ENCODE measurements at regions of chr5 and their contacts with region 1.

Region 1: GRCh38 chr5:178075840-178076548 is 37.3 kb upstream of the N4BP3 start:
- DNase-seq: peak; percentile 90
- ATAC-seq: peak; percentile 83
- H3K4me3 Mint-ChIP-seq: peak overlapping the region; percentile 55
- H3K27ac Mint-ChIP-seq: no peak overlapping the region
- H3K4me1 Mint-ChIP-seq: peaks cover 15% of the 10 kb centered on the region
- H3K27me3 Mint-ChIP-seq: peaks cover 15% of the 10 kb centered on the region
- CTCF ChIP-seq: peak; percentile 87

Region 2: DNA sequence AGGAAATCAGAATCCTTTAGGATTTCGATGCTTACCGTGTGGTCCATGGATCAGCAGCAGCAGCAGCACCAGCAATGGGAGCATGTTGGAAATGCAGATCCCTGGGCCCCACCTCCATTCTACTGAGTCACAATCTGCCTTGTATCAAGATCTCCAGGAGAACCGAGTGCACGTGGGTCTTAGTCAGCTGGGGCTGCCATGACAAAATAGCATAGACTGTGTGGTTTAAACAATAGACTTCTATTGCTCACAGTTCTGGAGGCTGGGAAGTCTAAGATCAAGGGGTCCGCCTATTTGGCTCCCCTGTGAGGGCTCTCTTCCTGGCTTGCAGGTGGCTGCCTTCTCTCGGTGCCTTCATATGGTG is 78.7 kb before region 1 on chr5:
- CTCF ChIA-PET with region 1: interaction called, 10 read pairs
- POLR2A ChIA-PET with region 1: no interaction called
- DNase-seq: no peak
- ATAC-seq: no peak
- H3K4me3 Mint-ChIP-seq: no peak overlapping the region
- H3K27ac Mint-ChIP-seq: no peak overlapping the region
- H3K4me1 Mint-ChIP-seq: peaks cover 13% of the 10 kb centered on the region
- H3K27me3 Mint-ChIP-seq: peaks cover 7% of the 10 kb centered on the region
- CTCF ChIP-seq: no peak

Region 3: DNA sequence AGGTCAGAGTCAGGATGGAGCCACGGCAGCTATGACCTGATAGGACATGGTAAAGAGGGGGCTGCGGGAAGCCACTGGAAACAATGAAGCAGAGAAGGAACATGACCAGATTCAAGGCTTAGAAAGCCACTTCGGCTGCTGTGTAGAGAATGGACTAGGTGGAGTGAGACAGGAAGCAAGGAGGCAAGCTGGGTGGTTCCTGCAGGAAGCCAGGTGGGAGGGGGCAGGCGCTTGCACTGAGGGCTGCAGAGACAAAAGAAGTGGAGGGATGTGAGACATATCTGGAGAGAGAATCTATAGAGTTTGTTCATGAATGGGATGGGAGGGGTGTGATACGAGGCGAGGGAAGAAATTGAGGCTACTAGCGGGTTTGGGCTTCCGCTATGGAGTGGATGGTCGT is 18.4 kb after region 1 on chr5:
- CTCF ChIA-PET with region 1: interaction called, 15 read pairs
- POLR2A ChIA-PET with region 1: no interaction called
- DNase-seq: no peak
- ATAC-seq: no peak
- H3K4me3 Mint-ChIP-seq: no peak overlapping the region
- H3K27ac Mint-ChIP-seq: no peak overlapping the region
- H3K4me1 Mint-ChIP-seq: peaks cover 3% of the 10 kb centered on the region; the same call in 1 of the 2 replicates
- H3K27me3 Mint-ChIP-seq: peaks cover 10% of the 10 kb centered on the region; the same call in 1 of the 2 replicates
- CTCF ChIP-seq: no peak

Region 4: DNA sequence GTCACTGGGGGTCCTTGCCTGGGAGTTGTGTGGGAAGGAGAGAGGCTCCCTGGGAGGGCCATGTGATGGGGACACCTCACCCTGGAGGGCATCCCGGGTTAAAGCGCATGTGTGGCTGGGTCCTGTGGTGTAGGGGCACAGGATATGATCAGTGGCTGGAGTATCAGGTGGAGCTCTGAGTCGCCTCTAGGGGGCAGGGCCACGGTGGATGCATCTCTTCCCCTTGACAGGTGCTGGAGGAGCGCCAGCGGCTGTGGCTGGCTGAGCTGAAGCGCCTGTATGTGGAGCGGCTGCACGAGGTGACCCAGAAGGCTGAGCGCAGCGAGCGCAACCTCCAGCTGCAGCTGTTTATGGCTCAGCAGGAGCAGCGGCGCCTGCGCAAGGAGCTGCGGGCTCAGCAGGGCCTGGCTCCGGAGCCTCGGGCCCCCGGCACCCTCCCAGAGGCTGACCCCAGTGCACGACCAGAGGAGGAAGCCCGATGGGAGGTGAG is 44.9 kb after region 1 on chr5:
- CTCF ChIA-PET with region 1: interaction called, 138 read pairs
- POLR2A ChIA-PET with region 1: interaction called, 4 read pairs
- DNase-seq: peak; percentile 83
- ATAC-seq: peak; percentile 62
- H3K4me3 Mint-ChIP-seq: no peak overlapping the region
- H3K27ac Mint-ChIP-seq: peak overlapping the region; percentile 57; the same call in 1 of the 2 replicates
- H3K4me1 Mint-ChIP-seq: peaks cover 65% of the 10 kb centered on the region
- H3K27me3 Mint-ChIP-seq: no peaks in the 10 kb centered on the region
- CTCF ChIP-seq: peak; percentile 51; the same call in 1 of the 2 replicates

Region 5: GRCh38 chr5:178146020-178146820 is 70.2 kb after region 1 on chr5:
- CTCF ChIA-PET with region 1: interaction called, 131 read pairs
- POLR2A ChIA-PET with region 1: interaction called, 7 read pairs
- DNase-seq: peak; percentile 92
- ATAC-seq: peak; percentile 86
- H3K4me3 Mint-ChIP-seq: no peak overlapping the region
- H3K27ac Mint-ChIP-seq: peak overlapping the region; percentile 94
- H3K4me1 Mint-ChIP-seq: peaks cover 5% of the 10 kb centered on the region
- H3K27me3 Mint-ChIP-seq: no peaks in the 10 kb centered on the region
- CTCF ChIP-seq: peak; percentile 64

Region 6: GRCh38 chr5:178182158-178182876 is 106.3 kb after region 1 on chr5:
- CTCF ChIA-PET with region 1: interaction called, 15 read pairs
- POLR2A ChIA-PET with region 1: no interaction called
- DNase-seq: no peak
- ATAC-seq: no peak
- H3K4me3 Mint-ChIP-seq: no peak overlapping the region; the same call in 1 of the 2 replicates
- H3K27ac Mint-ChIP-seq: peak overlapping the region; percentile 85
- H3K4me1 Mint-ChIP-seq: peaks cover 43% of the 10 kb centered on the region
- H3K27me3 Mint-ChIP-seq: no peaks in the 10 kb centered on the region
- CTCF ChIP-seq: no peak

Region 7: DNA sequence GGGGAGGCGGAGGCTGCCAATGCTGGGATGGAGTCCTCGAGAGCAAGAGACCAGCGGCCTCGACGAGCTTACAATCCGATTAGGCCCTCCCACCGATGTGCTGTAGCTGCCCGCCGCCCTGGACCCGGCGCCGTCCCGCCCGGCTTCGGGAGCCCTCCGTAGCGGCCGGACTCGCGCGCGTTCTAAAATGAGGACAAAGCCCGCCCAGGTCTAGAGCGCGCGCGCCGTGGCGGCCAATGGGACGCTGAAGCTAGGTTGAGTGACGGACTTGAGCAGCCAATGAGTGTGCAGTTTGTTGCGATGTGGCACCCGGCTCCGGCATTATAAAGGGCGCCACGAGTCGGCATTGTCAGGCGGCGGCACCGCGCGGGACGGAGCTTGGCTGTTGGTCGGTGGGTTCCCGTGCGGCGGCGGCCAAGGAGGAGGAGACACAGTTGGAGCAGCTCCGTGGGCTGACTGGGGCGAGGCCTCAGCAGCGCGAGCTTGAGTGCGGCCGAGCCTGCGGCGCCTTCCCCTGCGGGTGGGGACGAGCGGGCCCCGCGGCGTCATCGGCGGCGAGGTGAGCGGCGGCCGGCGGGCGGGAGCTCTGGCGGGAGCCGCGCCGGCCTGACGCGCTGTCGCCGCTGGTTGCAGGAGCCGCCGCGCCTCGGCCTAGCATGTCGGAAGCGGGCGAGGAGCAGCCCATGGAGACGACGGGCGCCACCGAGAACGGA is 128.3 kb after region 1 on chr5 and contains the start of gene HNRNPAB:
- CTCF ChIA-PET with region 1: interaction called, 11 read pairs
- POLR2A ChIA-PET with region 1: interaction called, 9 read pairs
- DNase-seq: peak; percentile 96
- ATAC-seq: peak; percentile 88
- H3K4me3 Mint-ChIP-seq: peak within 1 kb of the TSS; percentile 96
- H3K27ac Mint-ChIP-seq: peak within 1 kb of the TSS; percentile 98
- H3K4me1 Mint-ChIP-seq: peaks cover 28% of the 10 kb centered on the region
- H3K27me3 Mint-ChIP-seq: peaks cover 13% of the 10 kb centered on the region
- CTCF ChIP-seq: no peak
- total RNA-seq, gene HNRNPAB: 414 to 457 TPM (median 419 TPM) in 3 replicates

Region 8: GRCh38 chr5:178273665-178274541 is 197.9 kb after region 1 on chr5:
- CTCF ChIA-PET with region 1: no interaction called
- POLR2A ChIA-PET with region 1: no interaction called
- DNase-seq: no peak
- ATAC-seq: no peak
- H3K4me3 Mint-ChIP-seq: no peak overlapping the region
- H3K27ac Mint-ChIP-seq: no peak overlapping the region
- H3K4me1 Mint-ChIP-seq: no peaks in the 10 kb centered on the region
- H3K27me3 Mint-ChIP-seq: peaks cover 4% of the 10 kb centered on the region
- CTCF ChIP-seq: no peak

Region 9: GRCh38 chr5:178312880-178313282 is 236.9 kb after region 1 on chr5:
- CTCF ChIA-PET with region 1: no interaction called
- POLR2A ChIA-PET with region 1: no interaction called
- DNase-seq: no peak
- ATAC-seq: peak; percentile 27
- H3K4me3 Mint-ChIP-seq: no peak overlapping the region
- H3K27ac Mint-ChIP-seq: peak overlapping the region; percentile 70
- H3K4me1 Mint-ChIP-seq: peaks cover 11% of the 10 kb centered on the region
- H3K27me3 Mint-ChIP-seq: no peaks in the 10 kb centered on the region; the same call in 1 of the 2 replicates
- CTCF ChIP-seq: no peak

Region 10: DNA sequence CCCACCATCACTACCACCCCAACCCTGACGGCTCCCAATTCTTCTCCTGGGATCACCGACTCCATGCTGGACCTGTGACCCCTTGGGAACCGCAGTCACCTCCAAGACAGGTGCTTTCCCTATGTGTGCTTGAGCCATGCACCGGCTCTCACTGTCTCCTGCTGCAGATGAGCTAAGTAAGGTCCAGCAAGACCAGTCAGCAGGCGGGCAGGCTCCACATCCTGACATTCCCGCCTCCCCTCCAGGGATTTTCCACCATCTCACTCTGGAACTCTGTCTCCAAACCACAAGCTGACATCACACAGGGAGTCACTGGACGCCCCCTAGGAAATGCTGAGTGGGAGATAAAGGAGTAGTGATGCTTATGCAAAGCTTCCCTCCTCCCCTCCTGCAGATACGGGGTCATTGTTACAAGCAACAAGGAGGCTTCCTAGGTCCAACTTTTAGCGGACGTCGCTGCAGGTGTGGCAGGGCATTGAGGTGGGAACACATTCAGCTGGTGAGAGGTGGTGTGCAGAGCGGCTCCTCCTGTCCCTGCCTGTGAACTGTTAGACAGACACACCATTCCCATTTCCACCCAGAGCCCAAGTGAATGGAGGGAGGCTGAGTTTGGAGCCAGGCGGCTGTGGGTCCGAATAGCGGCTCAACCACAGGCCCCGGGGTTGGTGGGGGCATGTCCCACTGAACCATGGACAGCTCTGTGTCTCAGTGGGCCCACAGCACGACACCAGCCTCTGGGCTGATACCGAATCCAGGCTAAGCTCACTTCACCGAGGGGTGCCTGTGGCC is 285.9 kb after region 1 on chr5:
- CTCF ChIA-PET with region 1: no interaction called
- POLR2A ChIA-PET with region 1: no interaction called
- DNase-seq: no peak
- ATAC-seq: no peak
- H3K4me3 Mint-ChIP-seq: no peak overlapping the region
- H3K27ac Mint-ChIP-seq: peak overlapping the region; percentile 26; the same call in 1 of the 2 replicates
- H3K4me1 Mint-ChIP-seq: peaks cover 34% of the 10 kb centered on the region
- H3K27me3 Mint-ChIP-seq: no peaks in the 10 kb centered on the region
- CTCF ChIP-seq: no peak

Measured in WTC11 (cell line).